Dendritic cell treated with granulocyte-macrophage colony-stimulating factor and Interleukin-4, amounts not matched to agents 40 ng/mL and 50 ng/mL, for 4 days (primary cell): ENCODE measurements at regions of chr13 and their contacts with region 1.

Region 1: GRCh38 chr13:27953676-27954405 is 15.3 kb downstream of the CDX2 start:
- H3K4me3 Mint-ChIP-seq: peak overlapping the region; percentile 78
- H3K27ac Mint-ChIP-seq: peak overlapping the region; percentile 74
- H3K4me1 Mint-ChIP-seq: peaks cover 15% of the 10 kb centered on the region
- H3K27me3 Mint-ChIP-seq: peaks cover 80% of the 10 kb centered on the region

Region 2: GRCh38 chr13:27556109-27556508 is 397.7 kb before region 1 on chr13:
- intact Hi-C with region 1: loop called (anchors 10 kb)
- H3K4me3 Mint-ChIP-seq: no peak overlapping the region
- H3K27ac Mint-ChIP-seq: no peak overlapping the region
- H3K4me1 Mint-ChIP-seq: peaks cover 12% of the 10 kb centered on the region
- H3K27me3 Mint-ChIP-seq: no peaks in the 10 kb centered on the region

Region 3: GRCh38 chr13:27868641-27869435 is 85.0 kb before region 1 on chr13:
- intact Hi-C with region 1: loop called (anchors 1 kb)
- H3K4me3 Mint-ChIP-seq: no peak overlapping the region
- H3K27ac Mint-ChIP-seq: no peak overlapping the region
- H3K4me1 Mint-ChIP-seq: no peaks in the 10 kb centered on the region
- H3K27me3 Mint-ChIP-seq: peaks cover 34% of the 10 kb centered on the region

Region 4: GRCh38 chr13:28128030-28128429 is 174.2 kb after region 1 on chr13:
- intact Hi-C with region 1: no loop called
- H3K4me3 Mint-ChIP-seq: no peak overlapping the region
- H3K27ac Mint-ChIP-seq: no peak overlapping the region
- H3K4me1 Mint-ChIP-seq: no peaks in the 10 kb centered on the region
- H3K27me3 Mint-ChIP-seq: no peaks in the 10 kb centered on the region